Posterior vena cava (tissue), 2 donors: ENCODE measurements at regions of chr12 and their contacts with region 1.

Region 1: GRCh38 chr12:15728118-15728598 is 61.0 kb downstream of the EPS8 start:
- DNase-seq: no peak

Region 2: GRCh38 chr12:15584366-15585041 is 143.7 kb before region 1 on chr12:
- intact Hi-C with region 1: no loop called
- DNase-seq: no peak

Region 3: GRCh38 chr12:15763328-15763727 is 35.2 kb after region 1 on chr12:
- intact Hi-C with region 1: loop called in 1 of 2 experiments (anchors 1 kb)
- DNase-seq: no peak